Activated naive CD4-positive, alpha-beta T cell treated with anti-CD3 and anti-CD28 coated beads for 36 hours (primary cell): ENCODE measurements at regions of chr17 and their contacts with region 1.

Region 1: DNA sequence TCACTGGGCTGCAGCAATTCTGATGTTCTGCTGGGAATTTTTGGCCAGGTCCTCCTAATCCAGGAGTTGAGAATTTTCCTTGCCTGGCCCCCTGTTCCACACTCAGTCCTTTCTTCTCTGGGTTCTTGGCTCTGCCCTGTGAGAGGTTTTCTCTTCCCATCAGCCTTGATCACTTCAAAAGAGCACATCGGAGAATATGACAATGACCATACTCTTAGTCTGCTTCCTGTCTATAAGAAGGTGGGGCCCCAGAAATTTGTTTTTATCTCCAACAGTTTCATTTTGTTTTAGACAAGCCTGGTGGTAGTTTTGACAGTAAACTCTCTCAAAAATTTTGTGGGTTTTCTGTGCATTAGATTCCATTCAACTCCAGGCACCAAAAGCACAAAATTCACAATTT is 70.7 kb downstream of the C17orf67 start:
- DNase-seq: peak; percentile 37
- H3K4me3 Mint-ChIP-seq: peak overlapping the region; percentile 26
- H3K27ac Mint-ChIP-seq: peak overlapping the region; percentile 75
- H3K4me1 Mint-ChIP-seq: peaks cover 25% of the 10 kb centered on the region
- H3K27me3 Mint-ChIP-seq: no peaks in the 10 kb centered on the region

Region 2: GRCh38 chr17:56489980-56490379 is 273.0 kb before region 1 on chr17:
- CTCF ChIA-PET with region 1: no interaction called
- intact Hi-C with region 1: no loop called
- DNase-seq: no peak
- H3K4me3 Mint-ChIP-seq: no peak overlapping the region
- H3K27ac Mint-ChIP-seq: no peak overlapping the region
- H3K4me1 Mint-ChIP-seq: no peaks in the 10 kb centered on the region
- H3K27me3 Mint-ChIP-seq: peaks cover 3% of the 10 kb centered on the region

Region 3: DNA sequence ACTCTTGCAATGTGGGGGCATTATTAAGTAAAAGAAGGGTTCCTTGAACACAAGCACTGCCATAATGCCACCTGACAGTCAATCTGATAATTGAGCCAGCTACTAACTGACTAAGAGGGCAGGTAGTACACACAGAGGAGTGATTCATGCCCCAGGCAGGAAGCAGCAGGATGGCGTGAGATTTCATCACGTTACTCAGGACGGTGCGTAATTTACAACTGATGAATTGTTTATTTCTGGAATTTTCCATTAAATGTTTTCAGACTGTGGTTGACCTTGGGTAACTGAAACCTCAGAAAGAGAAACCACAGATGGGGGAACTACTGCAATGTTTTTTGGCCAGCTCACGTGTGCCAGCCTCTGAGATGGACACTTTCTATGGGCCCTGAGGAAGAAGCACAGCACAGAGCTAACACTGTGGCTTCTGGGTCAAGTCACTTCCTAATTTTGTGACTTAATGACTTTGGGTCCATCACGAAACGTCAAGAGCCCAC is 24.0 kb after region 1 on chr17:
- CTCF ChIA-PET with region 1: interaction called, 34 read pairs
- intact Hi-C with region 1: loop called (anchors 1 kb)
- DNase-seq: peak; percentile 86
- H3K4me3 Mint-ChIP-seq: peak overlapping the region; percentile 20
- H3K27ac Mint-ChIP-seq: peak overlapping the region; percentile 88
- H3K4me1 Mint-ChIP-seq: peaks cover 33% of the 10 kb centered on the region
- H3K27me3 Mint-ChIP-seq: no peaks in the 10 kb centered on the region

Region 4: GRCh38 chr17:56887550-56888467 is 124.8 kb after region 1 on chr17:
- CTCF ChIA-PET with region 1: no interaction called
- intact Hi-C with region 1: no loop called
- DNase-seq: no peak
- H3K4me3 Mint-ChIP-seq: no peak overlapping the region
- H3K27ac Mint-ChIP-seq: no peak overlapping the region
- H3K4me1 Mint-ChIP-seq: no peaks in the 10 kb centered on the region
- H3K27me3 Mint-ChIP-seq: no peaks in the 10 kb centered on the region